OCI-LY7 (cell line): ENCODE measurements at regions of chr11 and their contacts with region 1.

Region 1: GRCh38 chr11:65817835-65818742 is 15.7 kb upstream of the SNX32 start:
- DNase-seq: peak; percentile 91
- H3K4me3 ChIP-seq: peak overlapping the region; percentile 67
- H3K27ac ChIP-seq: no peak overlapping the region
- H3K4me1 ChIP-seq: peaks cover 5% of the 10 kb centered on the region
- CTCF ChIP-seq: peak; percentile 95

Region 2: GRCh38 chr11:65386307-65387081 is 431.6 kb before region 1 on chr11 and contains the start of gene FRMD8:
- CTCF ChIA-PET with region 1: no interaction called
- POLR2A ChIA-PET with region 1: no interaction called
- intact Hi-C with region 1: no loop called
- DNase-seq: peak; percentile 87
- H3K4me3 ChIP-seq: peak within 1 kb of the TSS; percentile 85
- H3K27ac ChIP-seq: peak within 1 kb of the TSS; percentile 16
- H3K4me1 ChIP-seq: peaks cover 49% of the 10 kb centered on the region
- CTCF ChIP-seq: no peak
- total RNA-seq, gene FRMD8: 36.7 and 55.8 TPM in 2 replicates

Region 3: DNA sequence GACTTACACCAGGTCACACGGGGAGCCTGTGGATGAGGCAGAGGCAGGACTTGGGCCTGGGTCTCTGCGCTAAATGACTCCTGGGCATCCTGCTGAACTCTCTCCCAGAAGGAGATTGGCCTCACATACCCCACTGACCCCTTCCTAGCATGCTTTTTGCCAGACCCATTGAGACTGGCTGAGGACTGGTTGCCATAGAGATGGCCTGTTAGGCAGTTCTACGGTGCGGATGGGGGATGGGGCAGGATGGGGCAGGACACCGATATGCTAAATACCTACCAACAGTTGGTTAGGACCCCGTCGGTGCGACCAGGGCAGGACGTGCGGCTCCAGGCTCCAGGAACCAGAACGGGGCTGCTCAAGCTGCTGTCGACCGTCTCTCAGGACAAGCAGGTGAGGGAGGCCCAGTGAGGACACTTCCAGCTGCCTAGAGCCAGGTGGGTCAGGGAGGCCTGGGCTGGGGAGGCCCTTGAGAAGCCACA is 127.4 kb after region 1 on chr11 and contains the start of gene TSGA10IP:
- CTCF ChIA-PET with region 1: no interaction called
- POLR2A ChIA-PET with region 1: no interaction called
- intact Hi-C with region 1: no loop called
- DNase-seq: no peak
- H3K4me3 ChIP-seq: no peak within 1 kb of the TSS
- H3K27ac ChIP-seq: no peak within 1 kb of the TSS
- H3K4me1 ChIP-seq: peaks cover 4% of the 10 kb centered on the region
- CTCF ChIP-seq: no peak
- total RNA-seq, gene TSGA10IP: not detected in 2 replicates

Region 4: DNA sequence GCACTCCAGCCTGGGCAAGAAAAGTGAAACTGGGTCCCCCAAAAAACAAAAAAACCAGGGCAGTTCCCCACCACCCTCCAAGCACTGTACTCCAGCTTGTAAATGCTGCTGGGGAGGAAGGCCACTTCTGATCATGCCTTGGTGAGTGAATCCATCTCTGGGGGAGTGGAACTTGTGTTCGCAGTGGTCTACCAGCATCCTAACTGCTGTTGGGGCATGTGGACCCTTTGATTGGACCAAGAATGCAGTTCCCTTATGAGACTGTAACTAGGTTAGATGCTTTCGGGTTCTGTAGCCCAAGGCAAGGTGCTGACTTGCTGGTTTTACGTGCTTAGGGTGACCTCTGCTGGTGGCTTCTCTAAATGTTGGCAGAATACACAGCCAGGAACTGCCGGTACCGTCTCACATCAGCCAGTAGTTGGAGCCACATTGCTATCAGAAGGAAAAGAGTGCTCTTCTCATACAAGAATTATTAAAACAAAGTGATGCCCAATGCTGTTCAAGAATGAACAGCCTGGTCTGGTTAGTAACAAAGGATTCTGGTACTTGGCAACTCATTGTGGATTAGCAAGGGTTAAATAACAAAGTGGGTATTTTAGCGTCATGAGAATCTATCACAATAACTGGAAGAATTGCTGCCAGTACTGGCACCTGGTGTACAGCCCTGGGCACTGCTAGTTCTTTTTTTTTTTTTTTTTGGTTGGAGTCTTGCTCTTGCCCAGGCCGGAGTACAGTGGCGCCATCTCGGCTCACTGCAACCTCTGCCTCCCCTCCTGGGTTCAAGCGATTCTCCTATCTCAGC is 170.9 kb after region 1 on chr11:
- CTCF ChIA-PET with region 1: no interaction called
- POLR2A ChIA-PET with region 1: no interaction called
- intact Hi-C with region 1: loop called (anchors 5 kb)
- DNase-seq: peak; percentile 94
- H3K4me3 ChIP-seq: no peak overlapping the region
- H3K27ac ChIP-seq: no peak overlapping the region
- H3K4me1 ChIP-seq: no peaks in the 10 kb centered on the region
- CTCF ChIP-seq: peak; percentile 100

Region 5: GRCh38 chr11:66008468-66009101 is 190.5 kb after region 1 on chr11:
- CTCF ChIA-PET with region 1: no interaction called
- POLR2A ChIA-PET with region 1: no interaction called
- intact Hi-C with region 1: no loop called
- DNase-seq: no peak
- H3K4me3 ChIP-seq: no peak overlapping the region
- H3K27ac ChIP-seq: no peak overlapping the region
- H3K4me1 ChIP-seq: peaks cover 18% of the 10 kb centered on the region
- CTCF ChIP-seq: no peak